Ascending aorta (tissue), 2 donors: ENCODE measurements at regions of chr6 and their contacts with region 1.

Region 1: GRCh38 chr6:8063761-8064637 is at the start of gene BLOC1S5:
- DNase-seq: peak; percentile 91 to 99
- H3K4me3 ChIP-seq: peak within 1 kb of the TSS; percentile 84 to 85
- H3K27ac ChIP-seq: peak within 1 kb of the TSS; percentile 87 to 92
- H3K4me1 ChIP-seq: peaks cover 0 to 4% of the 10 kb centered on the region in 2 donors
- H3K27me3 ChIP-seq: no peaks in the 10 kb centered on the region
- CTCF ChIP-seq: peak in 2 of 3 experiments; percentile 6 to 17
- total RNA-seq, gene BLOC1S5: 13.3 TPM

Region 2: GRCh38 chr6:7261032-7261841 is 802.8 kb before region 1 on chr6:
- intact Hi-C with region 1: loop called (anchors 10 kb)
- DNase-seq: peak; percentile 62 to 89
- H3K4me3 ChIP-seq: peak overlapping the region; percentile 75 to 76
- H3K27ac ChIP-seq: peak overlapping the region; percentile 51 to 61
- H3K4me1 ChIP-seq: peaks cover 0 to 7% of the 10 kb centered on the region in 2 donors
- H3K27me3 ChIP-seq: no peaks in the 10 kb centered on the region
- CTCF ChIP-seq: no peak

Region 3: DNA sequence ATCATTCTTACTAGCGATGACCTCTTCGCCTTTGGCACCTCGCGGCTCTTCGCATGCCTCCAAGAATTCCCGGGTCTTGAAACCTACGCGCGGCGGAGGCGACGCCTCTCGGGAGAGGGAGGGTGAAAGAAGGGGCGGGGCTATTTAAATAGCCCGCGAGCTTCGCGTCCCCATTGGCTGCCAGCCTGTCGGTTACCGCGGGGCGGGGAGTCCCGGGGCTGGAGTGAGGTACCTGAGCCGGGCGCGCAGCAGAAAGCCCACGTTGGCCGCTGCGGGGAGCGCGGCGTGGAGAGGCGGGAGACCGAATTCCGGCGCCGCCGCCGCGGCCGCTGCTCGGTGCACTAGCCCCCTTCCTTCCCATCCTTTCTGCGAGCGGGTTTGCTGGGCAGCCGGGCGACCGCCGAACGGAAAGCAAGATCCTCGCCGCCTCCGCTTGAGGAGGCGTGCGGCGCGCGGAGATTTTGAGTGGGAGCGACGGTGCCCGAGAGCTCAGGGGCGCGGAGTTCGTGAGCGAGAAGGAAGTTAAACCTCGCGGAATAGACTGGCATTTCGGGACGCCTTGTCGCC is 338.1 kb before region 1 on chr6 and contains the start of gene BMP6:
- intact Hi-C with region 1: loop called (anchors 5 kb)
- DNase-seq: peak; percentile 50 to 86
- H3K4me3 ChIP-seq: peak within 1 kb of the TSS; percentile 54 to 90
- H3K27ac ChIP-seq: no peak within 1 kb of the TSS
- H3K4me1 ChIP-seq: peaks cover 20 to 21% of the 10 kb centered on the region in 2 donors
- H3K27me3 ChIP-seq: peaks cover 11% of the 10 kb centered on the region
- CTCF ChIP-seq: no peak
- total RNA-seq, gene BMP6: 16.0 TPM

Region 4: DNA sequence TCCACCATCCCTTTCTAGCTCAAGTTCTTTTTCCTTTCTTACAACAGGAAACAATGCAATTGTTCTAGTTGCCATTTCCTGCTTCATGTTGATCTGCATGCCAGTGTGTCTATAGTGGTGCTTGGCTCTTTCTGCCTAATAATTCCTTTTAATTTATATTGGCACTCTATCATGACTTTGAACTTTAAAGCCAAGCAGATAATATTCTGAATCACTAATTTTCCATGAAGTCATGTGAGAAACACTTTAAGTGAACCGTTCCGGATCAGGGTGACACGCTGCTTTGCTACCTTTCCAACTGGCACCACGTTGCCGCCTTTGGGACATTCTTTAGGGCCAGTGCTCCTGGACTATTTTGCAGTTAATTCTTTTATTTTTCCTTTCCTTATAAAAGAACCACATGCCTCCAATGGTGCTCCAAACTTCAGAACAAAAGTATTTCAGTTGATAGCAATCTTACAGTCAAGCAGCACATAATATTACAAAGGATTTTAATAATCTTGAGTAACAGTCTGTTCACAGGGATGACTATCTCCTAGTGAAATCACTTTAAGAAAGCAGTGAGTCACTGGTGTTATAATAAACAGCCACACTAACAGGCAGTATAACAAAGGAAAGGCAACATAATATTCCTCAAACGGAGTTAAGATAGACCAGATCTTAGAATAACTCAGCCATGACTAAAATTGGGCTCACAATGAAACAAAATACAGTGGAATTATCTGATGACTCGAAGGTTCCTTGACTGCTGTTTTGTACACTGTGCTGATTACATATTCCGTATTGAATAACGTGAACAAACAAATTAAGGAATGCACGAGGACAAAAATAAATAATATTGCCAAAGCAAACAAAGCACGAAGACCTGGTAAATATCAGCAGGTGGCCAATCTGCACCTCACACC is 19.2 kb after region 1 on chr6:
- intact Hi-C with region 1: loop called (anchors 1 kb)
- DNase-seq: peak in 1 of 2 donors; percentile 81
- H3K4me3 ChIP-seq: peak overlapping the region in 1 of 2 donors; percentile 25
- H3K27ac ChIP-seq: peak overlapping the region; percentile 74 to 75
- H3K4me1 ChIP-seq: peaks cover 0 to 23% of the 10 kb centered on the region in 2 donors
- H3K27me3 ChIP-seq: no peaks in the 10 kb centered on the region
- CTCF ChIP-seq: no peak

Region 5: DNA sequence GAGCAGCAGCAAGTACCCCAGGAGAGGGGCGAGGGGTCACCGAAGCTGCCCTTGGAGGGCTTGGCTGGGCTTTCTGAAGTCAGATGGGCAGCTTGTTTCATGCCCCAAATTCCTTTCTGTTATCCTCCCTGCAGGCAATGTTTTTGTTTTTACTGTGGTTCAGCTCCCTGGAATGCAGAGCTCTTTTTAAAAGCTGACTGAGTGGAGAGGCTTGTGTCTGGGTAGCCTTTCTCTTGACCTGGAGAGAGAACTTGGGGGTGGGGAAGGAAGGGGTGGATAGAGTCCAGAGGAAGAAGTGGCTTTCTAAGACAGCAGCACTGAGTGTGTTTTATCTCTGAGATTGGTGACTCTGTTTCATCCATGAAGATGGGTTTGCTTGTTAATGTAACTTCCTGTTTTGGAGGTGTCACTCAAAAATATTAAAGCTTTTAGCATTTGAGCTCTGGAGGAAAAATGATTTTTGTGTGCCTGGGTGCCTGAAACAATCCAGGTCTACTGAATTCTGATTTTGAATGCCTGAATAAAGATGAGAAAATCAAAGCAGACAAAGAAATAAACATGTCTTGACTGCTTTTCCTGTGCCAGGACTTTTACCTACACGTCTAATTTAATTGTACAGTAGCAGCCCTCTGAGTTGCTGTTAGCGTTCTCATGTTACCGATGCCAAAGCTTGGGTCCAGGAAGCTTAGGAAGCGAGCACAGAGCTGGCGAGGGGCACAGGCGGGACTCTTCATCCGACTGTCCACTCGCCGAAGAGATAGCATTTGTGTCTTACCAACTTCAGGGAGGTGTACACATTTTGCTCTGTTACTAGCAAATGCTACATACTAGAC is 116.5 kb after region 1 on chr6:
- intact Hi-C with region 1: loop called (anchors 5 kb)
- DNase-seq: peak in 1 of 2 donors; percentile 66
- H3K4me3 ChIP-seq: no peak overlapping the region
- H3K27ac ChIP-seq: peak overlapping the region; percentile 49 to 67
- H3K4me1 ChIP-seq: peaks cover 2 to 28% of the 10 kb centered on the region in 2 donors
- H3K27me3 ChIP-seq: no peaks in the 10 kb centered on the region
- CTCF ChIP-seq: no peak